Tibial artery (tissue), 4 donors: ENCODE measurements at regions of chr13 and their contacts with region 1.

Region 1: GRCh38 chr13:107608736-107609135 is 606.6 kb downstream of the LIG4 start:
- DNase-seq: no peak
- H3K4me3 ChIP-seq: no peak overlapping the region
- H3K27ac ChIP-seq: no peak overlapping the region
- H3K4me1 ChIP-seq: no peaks in the 10 kb centered on the region
- H3K27me3 ChIP-seq: no peaks in the 10 kb centered on the region
- CTCF ChIP-seq: no peak

Region 2: GRCh38 chr13:106042996-106043581 is 1565.6 kb before region 1 on chr13:
- intact Hi-C with region 1: loop called (anchors 5 kb)
- DNase-seq: no peak
- H3K4me3 ChIP-seq: no peak overlapping the region
- H3K27ac ChIP-seq: no peak overlapping the region
- H3K4me1 ChIP-seq: no peaks in the 10 kb centered on the region
- H3K27me3 ChIP-seq: no peaks in the 10 kb centered on the region
- CTCF ChIP-seq: no peak

Region 3: DNA sequence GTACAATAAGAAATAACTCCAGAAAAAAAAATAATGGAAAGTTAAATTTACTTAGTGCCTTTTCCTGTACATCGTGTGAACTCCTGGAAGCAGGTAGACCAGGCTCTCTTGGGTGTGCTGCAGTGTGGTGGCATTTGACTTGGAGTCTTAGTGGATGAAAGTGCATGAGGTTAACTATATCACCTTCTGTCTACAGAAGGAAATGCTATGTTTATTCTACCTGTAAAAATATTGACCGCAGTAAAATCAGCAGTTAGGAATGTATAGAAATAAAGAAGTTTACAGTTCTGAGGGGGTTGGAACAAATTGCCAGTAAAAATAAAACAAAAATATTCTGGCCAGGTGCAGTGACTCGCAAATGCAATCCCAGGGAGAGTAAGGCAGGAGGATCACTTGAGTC is 115.5 kb before region 1 on chr13:
- intact Hi-C with region 1: no loop called
- DNase-seq: no peak
- H3K4me3 ChIP-seq: no peak overlapping the region
- H3K27ac ChIP-seq: no peak overlapping the region
- H3K4me1 ChIP-seq: no peaks in the 10 kb centered on the region
- H3K27me3 ChIP-seq: no peaks in the 10 kb centered on the region
- CTCF ChIP-seq: no peak